ENCODE measurements at regions of chr12 and their contacts with region 1.

Region 1: DNA sequence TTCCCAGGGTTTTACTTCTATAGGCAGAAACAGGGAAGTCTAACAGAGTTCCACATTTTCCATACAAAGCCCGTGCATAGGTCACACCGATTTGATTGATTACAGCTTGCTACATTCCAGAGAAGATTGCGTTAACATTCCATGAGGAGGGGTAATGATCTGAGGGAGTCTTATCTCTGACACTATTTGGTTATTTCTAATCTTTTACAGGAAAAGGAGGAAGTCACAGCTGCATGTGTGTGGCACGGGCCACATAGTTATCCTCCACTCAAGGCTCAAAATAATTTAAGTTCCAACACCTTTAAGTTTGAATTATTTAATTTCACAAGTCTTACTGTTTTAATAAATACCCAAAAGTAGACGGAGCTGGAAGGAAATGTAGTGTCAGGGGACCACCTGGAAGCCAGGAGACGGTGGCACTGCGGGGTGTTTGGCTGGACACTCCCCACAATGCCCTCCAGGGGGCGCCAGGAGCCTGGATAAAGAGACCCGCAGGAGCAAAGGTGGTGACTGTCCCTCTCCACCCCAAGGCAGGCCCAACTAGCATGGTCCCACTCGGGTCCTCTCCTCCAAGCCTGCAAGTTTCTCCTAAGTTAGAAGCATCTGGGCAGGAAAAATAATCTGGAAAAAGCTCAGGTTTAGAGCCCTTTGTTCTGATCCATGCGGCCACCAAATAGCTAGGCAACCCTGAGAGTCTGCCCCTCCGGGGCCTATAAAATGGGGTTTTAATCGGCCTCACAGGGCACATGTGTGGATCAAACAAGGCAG is 20.2 kb downstream of the KRT8 start:
- DNase-seq: peak; percentile 63 to 75 (median 69)
- H3K4me3 ChIP-seq: no peak overlapping the region
- H3K27ac ChIP-seq: no peak overlapping the region
- H3K4me1 ChIP-seq: peaks cover 0 to 11% (median 0%) of the 10 kb centered on the region in 4 experiments
- H3K27me3 ChIP-seq: no peaks in the 10 kb centered on the region

Region 2: DNA sequence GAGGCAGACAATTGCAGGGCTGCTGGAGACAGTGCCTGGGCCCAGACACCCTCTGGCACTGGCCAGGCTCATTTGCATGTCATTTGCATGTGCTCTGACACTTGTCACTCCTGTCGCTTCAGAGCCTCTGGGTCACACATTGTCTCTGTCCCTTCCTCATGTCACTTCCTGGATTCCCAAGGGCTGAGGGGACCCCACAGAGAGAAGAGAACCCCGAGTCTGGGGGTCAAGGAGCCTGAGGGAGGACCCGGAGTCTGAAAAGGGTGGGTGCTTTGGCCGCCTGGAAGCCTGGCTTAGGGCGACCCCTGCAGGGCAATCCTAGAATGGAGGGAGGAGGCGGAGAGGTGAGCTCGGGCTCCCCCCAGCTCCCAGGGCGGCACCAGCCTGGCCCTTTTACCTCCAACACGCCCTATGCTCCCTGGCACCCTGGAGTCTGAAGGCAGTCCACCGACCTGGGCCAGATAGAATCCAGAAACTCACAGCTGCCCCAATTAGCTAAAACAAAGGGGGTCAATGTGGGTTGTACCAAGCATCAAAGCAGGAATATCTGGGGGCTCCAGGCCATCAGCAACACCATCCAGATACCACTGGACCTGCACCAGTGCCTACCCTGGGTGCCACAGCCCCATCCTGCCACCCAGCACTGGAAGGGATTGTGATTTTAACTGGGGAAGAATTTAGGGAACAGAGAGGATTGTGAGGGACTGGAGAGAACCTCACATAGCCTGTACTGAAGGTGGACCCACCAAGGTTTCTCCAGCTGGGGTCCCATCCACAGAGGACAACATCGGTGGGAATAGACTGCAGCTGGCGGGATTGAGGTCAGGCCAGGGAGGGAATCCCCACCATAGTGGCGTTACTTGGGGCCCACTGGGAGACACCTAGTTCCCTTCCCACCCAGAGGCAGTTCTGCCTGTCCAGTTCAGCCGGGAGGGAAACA is 14.1 kb before region 1 on chr12:
- CTCF ChIA-PET with region 1: interaction called, 33 read pairs
- POLR2A ChIA-PET with region 1: interaction called, 3 read pairs
- DNase-seq: peak; percentile 61 to 72 (median 63)
- H3K4me3 ChIP-seq: no peak overlapping the region
- H3K27ac ChIP-seq: no peak overlapping the region
- H3K4me1 ChIP-seq: peaks cover 0 to 39% (median 30%) of the 10 kb centered on the region in 4 experiments
- H3K27me3 ChIP-seq: no peaks in the 10 kb centered on the region

Region 3: GRCh38 chr12:52903285-52903854 is 18.7 kb after region 1 on chr12:
- CTCF ChIA-PET with region 1: interaction called, 47 read pairs
- POLR2A ChIA-PET with region 1: no interaction called
- DNase-seq: peak; percentile 87 to 93 (median 92)
- H3K4me3 ChIP-seq: peak overlapping the region; percentile 4 to 77 (median 56)
- H3K27ac ChIP-seq: peak overlapping the region; percentile 58 to 74
- H3K4me1 ChIP-seq: peaks cover 3 to 37% (median 33%) of the 10 kb centered on the region in 4 experiments
- H3K27me3 ChIP-seq: no peaks in the 10 kb centered on the region

Region 4: GRCh38 chr12:52925717-52926595 is 41.2 kb after region 1 on chr12:
- CTCF ChIA-PET with region 1: interaction called, 15 read pairs
- POLR2A ChIA-PET with region 1: no interaction called
- DNase-seq: no peak
- H3K4me3 ChIP-seq: no peak overlapping the region
- H3K27ac ChIP-seq: peak overlapping the region in 1 of 2 experiments; percentile 58
- H3K4me1 ChIP-seq: no peaks in the 10 kb centered on the region
- H3K27me3 ChIP-seq: no peaks in the 10 kb centered on the region

Region 5: DNA sequence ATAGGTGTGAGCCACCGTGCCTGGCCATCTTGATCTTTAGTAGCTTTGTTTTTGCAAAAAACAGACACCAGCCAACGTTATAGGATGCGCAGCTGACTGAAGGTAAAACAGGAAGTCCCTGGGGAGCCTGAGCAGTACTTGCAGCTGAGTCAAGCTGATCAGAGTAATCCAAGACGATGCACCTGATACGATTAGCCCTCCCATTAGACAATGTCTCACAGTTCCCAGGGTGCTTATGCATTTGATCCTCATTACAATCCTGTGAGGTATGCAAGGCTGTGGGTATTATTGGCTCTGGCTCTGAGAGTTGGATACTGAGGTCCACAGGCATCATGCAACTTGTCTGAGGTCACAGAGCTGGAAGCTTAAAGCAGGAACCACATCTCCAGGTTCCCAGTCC is 72.3 kb after region 1 on chr12:
- CTCF ChIA-PET with region 1: interaction called, 47 read pairs
- POLR2A ChIA-PET with region 1: no interaction called
- DNase-seq: peak in 2 of 3 donors; percentile 46 to 57
- H3K4me3 ChIP-seq: no peak overlapping the region
- H3K27ac ChIP-seq: no peak overlapping the region
- H3K4me1 ChIP-seq: peaks cover 0 to 5% (median 0%) of the 10 kb centered on the region in 4 experiments
- H3K27me3 ChIP-seq: no peaks in the 10 kb centered on the region

Measured in common myeloid progenitor, CD34-positive (primary cell).